HCT116 (cell line): ENCODE measurements at regions of chr14 and their contacts with region 1.

Region 1: DNA sequence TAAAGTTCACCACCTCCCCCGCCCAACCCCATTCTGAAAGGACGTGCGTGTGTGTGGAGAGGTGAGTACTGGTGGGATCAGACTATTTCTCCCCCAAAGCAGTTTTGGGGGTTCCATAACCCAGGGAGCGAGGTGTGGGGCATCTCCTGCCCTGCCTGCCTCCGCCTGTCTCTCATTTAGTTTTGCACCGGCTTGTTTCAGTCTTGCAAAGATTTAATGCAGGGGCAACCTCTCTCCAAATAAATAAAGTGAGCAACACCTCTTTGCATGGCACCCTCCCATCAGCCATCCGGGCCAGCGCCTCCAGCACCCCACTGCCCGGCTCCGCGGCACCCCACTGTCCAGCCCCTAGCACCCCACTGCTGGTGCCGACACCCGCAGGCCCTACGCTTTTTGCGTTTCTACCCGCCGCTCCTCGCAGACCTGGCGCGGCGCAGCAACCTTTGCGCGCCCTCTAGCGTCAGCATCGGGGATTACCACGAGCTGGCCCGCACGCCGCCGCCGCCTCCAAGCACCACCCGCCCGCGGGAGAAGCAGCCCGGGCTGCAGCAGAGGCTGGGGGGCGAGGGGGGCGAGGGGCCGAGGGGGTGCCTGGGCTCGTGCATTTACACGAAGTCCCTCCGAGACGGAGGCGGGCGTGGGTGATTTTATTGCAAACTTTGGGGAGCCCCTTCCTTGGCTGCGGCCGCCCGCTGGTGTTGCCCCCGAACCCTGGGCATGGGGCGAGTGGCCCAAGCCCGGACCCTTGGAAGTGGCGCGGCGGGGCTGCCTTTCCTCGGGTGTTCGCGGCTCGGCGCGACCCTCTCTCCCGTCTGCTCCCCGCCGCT is 55.8 kb upstream of the VRK1 start:
- DNase-seq: no peak
- ATAC-seq: peak; percentile 92
- H3K4me3 ChIP-seq: peak overlapping the region; percentile 40 to 60
- H3K27ac ChIP-seq: no peak overlapping the region
- H3K4me1 ChIP-seq: no peaks in the 10 kb centered on the region; a peak in 2 of 4 replicates
- H3K27me3 ChIP-seq: peaks cover 18% of the 10 kb centered on the region
- CTCF ChIP-seq: peak; percentile 76 to 82 (median 78)
- POLR2A ChIP-seq: no peak
- RAD21 ChIP-seq: peak; percentile 85

Region 2: GRCh38 chr14:96567289-96567899 is 174.0 kb before region 1 on chr14:
- CTCF ChIA-PET with region 1: interaction called, 5 read pairs
- POLR2A ChIA-PET with region 1: no interaction called
- RAD21 ChIA-PET with region 1: no interaction called
- intact Hi-C with region 1: loop called (anchors 5 kb)
- DNase-seq: no peak
- ATAC-seq: peak; percentile 84
- H3K4me3 ChIP-seq: no peak overlapping the region
- H3K27ac ChIP-seq: no peak overlapping the region
- H3K4me1 ChIP-seq: no peaks in the 10 kb centered on the region
- H3K27me3 ChIP-seq: no peaks in the 10 kb centered on the region
- CTCF ChIP-seq: peak; percentile 26 to 67 (median 51); a peak in 4 of 6 replicates
- POLR2A ChIP-seq: no peak
- RAD21 ChIP-seq: peak; percentile 43; the same call in 1 of the 2 replicates

Region 3: DNA sequence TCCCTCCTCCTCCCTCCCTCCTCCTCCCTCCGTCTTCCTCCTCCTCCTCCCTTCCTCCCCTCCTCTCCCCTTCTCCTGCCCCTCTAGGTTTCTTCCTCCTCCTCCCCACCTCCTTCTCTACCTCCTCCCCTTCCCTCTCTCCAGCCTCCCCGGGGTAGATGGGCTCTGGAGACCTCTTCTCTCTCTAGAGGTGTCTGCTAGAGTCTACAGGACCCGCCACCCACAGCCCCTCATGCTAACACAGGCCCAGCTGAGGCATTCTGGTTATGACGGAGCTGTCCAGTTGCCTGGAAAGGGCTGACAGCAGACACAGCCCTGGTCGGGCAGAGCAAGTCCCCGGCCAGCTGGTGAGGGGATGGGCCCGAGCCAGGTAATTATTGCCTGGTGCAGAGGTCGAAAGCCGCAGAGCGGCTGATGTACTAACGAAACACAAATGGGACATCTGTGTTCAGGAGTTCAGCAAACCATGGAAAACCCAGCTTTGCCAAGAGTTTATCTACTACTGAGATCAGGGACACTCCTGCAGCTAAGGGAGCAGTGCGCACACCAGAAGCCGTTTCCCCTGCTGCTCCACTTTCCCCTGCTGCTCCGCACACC is 142.9 kb before region 1 on chr14:
- CTCF ChIA-PET with region 1: no interaction called
- POLR2A ChIA-PET with region 1: no interaction called
- RAD21 ChIA-PET with region 1: no interaction called
- intact Hi-C with region 1: no loop called
- DNase-seq: no peak
- ATAC-seq: no peak
- H3K4me3 ChIP-seq: no peak overlapping the region
- H3K27ac ChIP-seq: no peak overlapping the region
- H3K4me1 ChIP-seq: no peaks in the 10 kb centered on the region
- H3K27me3 ChIP-seq: no peaks in the 10 kb centered on the region
- CTCF ChIP-seq: no peak
- POLR2A ChIP-seq: no peak
- RAD21 ChIP-seq: no peak

Region 4: GRCh38 chr14:96729889-96730288 is 11.5 kb before region 1 on chr14:
- CTCF ChIA-PET with region 1: interaction called, 10 read pairs
- POLR2A ChIA-PET with region 1: no interaction called
- RAD21 ChIA-PET with region 1: no interaction called
- intact Hi-C with region 1: no loop called
- DNase-seq: no peak
- ATAC-seq: no peak
- H3K4me3 ChIP-seq: no peak overlapping the region
- H3K27ac ChIP-seq: no peak overlapping the region
- H3K4me1 ChIP-seq: no peaks in the 10 kb centered on the region
- H3K27me3 ChIP-seq: peaks cover 5% of the 10 kb centered on the region; the same call in 1 of the 2 replicates
- CTCF ChIP-seq: no peak
- POLR2A ChIP-seq: no peak
- RAD21 ChIP-seq: no peak

Region 5: DNA sequence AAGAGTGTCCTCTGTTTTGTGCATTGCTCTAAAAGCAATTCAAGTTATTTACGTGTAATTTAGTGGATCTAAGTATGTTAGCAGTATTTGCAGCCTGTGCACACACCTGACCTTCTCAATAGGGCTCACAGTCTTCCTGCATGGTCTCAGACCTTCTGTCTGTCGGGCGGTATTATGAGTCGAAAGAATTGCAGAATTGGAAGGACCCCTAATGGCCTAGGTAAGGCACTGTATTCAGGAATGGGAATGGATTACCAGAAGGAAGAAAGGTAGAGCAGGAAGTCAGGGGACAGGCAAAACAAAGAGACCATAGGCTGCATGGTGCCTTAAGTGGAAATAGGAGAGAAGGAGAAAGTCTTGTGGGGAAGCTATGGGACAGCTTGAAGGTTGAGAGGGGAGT is 397.4 kb after region 1 on chr14:
- CTCF ChIA-PET with region 1: no interaction called
- POLR2A ChIA-PET with region 1: no interaction called
- RAD21 ChIA-PET with region 1: no interaction called
- intact Hi-C with region 1: loop called (anchors 10 kb)
- DNase-seq: peak; percentile 29
- ATAC-seq: peak; percentile 78
- H3K4me3 ChIP-seq: no peak overlapping the region
- H3K27ac ChIP-seq: no peak overlapping the region
- H3K4me1 ChIP-seq: no peaks in the 10 kb centered on the region
- H3K27me3 ChIP-seq: no peaks in the 10 kb centered on the region
- CTCF ChIP-seq: peak; percentile 40 to 55 (median 46); a peak in 4 of 6 replicates
- POLR2A ChIP-seq: no peak
- RAD21 ChIP-seq: peak; percentile 82